WTC11 (cell line): ENCODE measurements at regions of chr1 and their contacts with region 1.

Region 1: GRCh38 chr1:147627435-147628110 is 42.8 kb downstream of the ACP6 start:
- DNase-seq: peak; percentile 60
- ATAC-seq: peak; percentile 81
- H3K4me3 Mint-ChIP-seq: no peak overlapping the region
- H3K27ac Mint-ChIP-seq: no peak overlapping the region
- H3K4me1 Mint-ChIP-seq: peaks cover 25% of the 10 kb centered on the region
- H3K27me3 Mint-ChIP-seq: no peaks in the 10 kb centered on the region
- CTCF ChIP-seq: peak; percentile 89

Region 2: GRCh38 chr1:147287133-147287865 is 340.3 kb before region 1 on chr1:
- CTCF ChIA-PET with region 1: no interaction called
- POLR2A ChIA-PET with region 1: no interaction called
- DNase-seq: no peak
- ATAC-seq: no peak
- H3K4me3 Mint-ChIP-seq: no peak overlapping the region
- H3K27ac Mint-ChIP-seq: no peak overlapping the region
- H3K4me1 Mint-ChIP-seq: 0 out of 2 replicates have a peak, but pooled peaks cover 2% of the 10 kb centered on the region
- H3K27me3 Mint-ChIP-seq: no peaks in the 10 kb centered on the region
- CTCF ChIP-seq: no peak

Region 3: GRCh38 chr1:147494998-147495580 is 132.5 kb before region 1 on chr1:
- CTCF ChIA-PET with region 1: interaction called, 10 read pairs
- POLR2A ChIA-PET with region 1: no interaction called
- DNase-seq: peak; percentile 79
- ATAC-seq: peak; percentile 93
- H3K4me3 Mint-ChIP-seq: no peak overlapping the region
- H3K27ac Mint-ChIP-seq: no peak overlapping the region
- H3K4me1 Mint-ChIP-seq: peaks cover 3% of the 10 kb centered on the region; the same call in 1 of the 2 replicates
- H3K27me3 Mint-ChIP-seq: peaks cover 2% of the 10 kb centered on the region
- CTCF ChIP-seq: peak; percentile 78

Region 4: DNA sequence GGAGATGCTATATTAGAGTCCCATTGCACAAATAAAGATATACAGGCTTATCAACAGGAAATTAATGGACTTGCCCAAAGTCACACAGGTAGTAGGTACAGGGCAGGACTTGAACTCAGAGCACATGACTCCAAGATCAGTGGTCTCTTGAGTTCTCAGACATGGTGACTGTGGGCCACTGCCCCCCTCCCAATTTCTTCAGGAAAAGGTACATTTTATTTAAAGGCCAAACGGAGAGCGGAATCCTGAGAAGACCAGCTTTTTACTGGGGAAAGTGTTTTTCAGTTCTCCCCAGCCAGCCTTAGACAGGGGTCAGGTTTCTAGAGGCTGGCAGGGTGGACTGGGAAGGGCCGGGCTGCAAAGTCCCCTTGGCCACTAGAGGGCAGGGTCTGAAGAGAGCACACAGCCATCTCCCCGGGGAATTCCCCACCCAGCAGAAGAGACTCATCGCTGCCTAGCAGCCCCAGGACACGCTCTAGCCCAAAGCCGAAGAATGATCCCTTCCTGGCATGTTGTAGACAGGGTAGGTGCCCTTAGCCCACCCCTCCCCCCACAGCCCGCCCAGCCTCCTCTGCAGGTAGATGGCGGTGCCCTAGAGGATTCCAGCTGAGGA is 13.1 kb after region 1 on chr1:
- CTCF ChIA-PET with region 1: interaction called, 25 read pairs
- POLR2A ChIA-PET with region 1: no interaction called
- DNase-seq: peak; percentile 90
- ATAC-seq: peak; percentile 98
- H3K4me3 Mint-ChIP-seq: no peak overlapping the region
- H3K27ac Mint-ChIP-seq: no peak overlapping the region
- H3K4me1 Mint-ChIP-seq: peaks cover 11% of the 10 kb centered on the region
- H3K27me3 Mint-ChIP-seq: no peaks in the 10 kb centered on the region
- CTCF ChIP-seq: peak; percentile 84

Region 5: GRCh38 chr1:147670317-147671041 is 42.9 kb after region 1 on chr1 and contains the start of gene ACP6:
- CTCF ChIA-PET with region 1: no interaction called
- POLR2A ChIA-PET with region 1: no interaction called
- DNase-seq: peak; percentile 96
- ATAC-seq: peak; percentile 97
- H3K4me3 Mint-ChIP-seq: peak within 1 kb of the TSS; percentile 83
- H3K27ac Mint-ChIP-seq: peak within 1 kb of the TSS; percentile 13; the same call in 1 of the 2 replicates
- H3K4me1 Mint-ChIP-seq: peaks cover 31% of the 10 kb centered on the region
- H3K27me3 Mint-ChIP-seq: no peaks in the 10 kb centered on the region
- CTCF ChIP-seq: no peak
- total RNA-seq, gene ACP6: 31.5 to 35.6 TPM (median 33.3 TPM) in 3 replicates

Region 6: GRCh38 chr1:147840907-147841306 is 213.3 kb after region 1 on chr1:
- CTCF ChIA-PET with region 1: no interaction called
- POLR2A ChIA-PET with region 1: no interaction called
- DNase-seq: no peak
- ATAC-seq: 0 out of 2 replicates have a peak, but pooled peaks have one; percentile 15
- H3K4me3 Mint-ChIP-seq: no peak overlapping the region
- H3K27ac Mint-ChIP-seq: no peak overlapping the region
- H3K4me1 Mint-ChIP-seq: peaks cover 48% of the 10 kb centered on the region
- H3K27me3 Mint-ChIP-seq: peaks cover 2% of the 10 kb centered on the region
- CTCF ChIP-seq: no peak

Region 7: GRCh38 chr1:147878022-147878421 is 250.4 kb after region 1 on chr1:
- CTCF ChIA-PET with region 1: no interaction called
- POLR2A ChIA-PET with region 1: no interaction called
- DNase-seq: no peak
- ATAC-seq: no peak
- H3K4me3 Mint-ChIP-seq: no peak overlapping the region
- H3K27ac Mint-ChIP-seq: no peak overlapping the region
- H3K4me1 Mint-ChIP-seq: peaks cover 14% of the 10 kb centered on the region
- H3K27me3 Mint-ChIP-seq: peaks cover 15% of the 10 kb centered on the region; the same call in 1 of the 2 replicates
- CTCF ChIP-seq: no peak